CD14-positive monocyte (primary cell): ENCODE measurements at regions of chr19 and their contacts with region 1.

Region 1: GRCh38 chr19:1189419-1189818 is 15.4 kb upstream of the SBNO2 start:
- DNase-seq: no peak
- H3K4me3 ChIP-seq: no peak overlapping the region
- H3K4me3 Mint-ChIP-seq: no peak overlapping the region
- H3K27ac ChIP-seq: no peak overlapping the region
- H3K27ac Mint-ChIP-seq: no peak overlapping the region
- H3K4me1 ChIP-seq: peaks cover 10 to 19% of the 10 kb centered on the region in 2 donors
- H3K4me1 Mint-ChIP-seq: peaks cover 23% of the 10 kb centered on the region
- H3K27me3 ChIP-seq: no peaks in the 10 kb centered on the region
- H3K27me3 Mint-ChIP-seq: peaks cover 0 to 8% (median 4%) of the 10 kb centered on the region in 3 donors
- CTCF ChIP-seq: no peak

Region 2: GRCh38 chr19:1113033-1113985 is 76.1 kb before region 1 on chr19:
- intact Hi-C with region 1: loop called (anchors 5 kb)
- DNase-seq: peak; percentile 83 to 90 (median 87)
- H3K4me3 ChIP-seq: no peak overlapping the region
- H3K4me3 Mint-ChIP-seq: no peak overlapping the region
- H3K27ac ChIP-seq: peak overlapping the region; percentile 2 to 43
- H3K27ac Mint-ChIP-seq: peak overlapping the region in 6 of 7 donors; percentile 10 to 64 (median 43)
- H3K4me1 ChIP-seq: peaks cover 8 to 14% of the 10 kb centered on the region in 2 donors
- H3K4me1 Mint-ChIP-seq: peaks cover 8% of the 10 kb centered on the region
- H3K27me3 ChIP-seq: no peaks in the 10 kb centered on the region
- H3K27me3 Mint-ChIP-seq: peaks cover 0 to 2% (median 0%) of the 10 kb centered on the region in 3 donors
- CTCF ChIP-seq: peak; percentile 98